Posterior vena cava (tissue), 2 donors: ENCODE measurements at regions of chr6 and their contacts with region 1.

Region 1: GRCh38 chr6:52233975-52234823 is 10.1 kb downstream of the IL17F start:
- DNase-seq: no peak

Region 2: GRCh38 chr6:52108128-52108527 is 126.1 kb before region 1 on chr6:
- intact Hi-C with region 1: loop called (anchors 10 kb)
- DNase-seq: no peak